A673 (cell line): ENCODE measurements at regions of chr3 and their contacts with region 1.

Region 1: GRCh38 chr3:169764452-169765274 is at the start of gene TERC:
- DNase-seq: peak; percentile 92
- H3K4me3 ChIP-seq: peak within 1 kb of the TSS; percentile 73
- H3K27ac ChIP-seq: peak within 1 kb of the TSS; percentile 90
- H3K4me1 ChIP-seq: no peaks in the 10 kb centered on the region
- H3K27me3 ChIP-seq: no peaks in the 10 kb centered on the region
- CTCF ChIP-seq: no peak
- total RNA-seq, gene TERC: 5.8 and 16.7 TPM in 2 replicates

Region 2: DNA sequence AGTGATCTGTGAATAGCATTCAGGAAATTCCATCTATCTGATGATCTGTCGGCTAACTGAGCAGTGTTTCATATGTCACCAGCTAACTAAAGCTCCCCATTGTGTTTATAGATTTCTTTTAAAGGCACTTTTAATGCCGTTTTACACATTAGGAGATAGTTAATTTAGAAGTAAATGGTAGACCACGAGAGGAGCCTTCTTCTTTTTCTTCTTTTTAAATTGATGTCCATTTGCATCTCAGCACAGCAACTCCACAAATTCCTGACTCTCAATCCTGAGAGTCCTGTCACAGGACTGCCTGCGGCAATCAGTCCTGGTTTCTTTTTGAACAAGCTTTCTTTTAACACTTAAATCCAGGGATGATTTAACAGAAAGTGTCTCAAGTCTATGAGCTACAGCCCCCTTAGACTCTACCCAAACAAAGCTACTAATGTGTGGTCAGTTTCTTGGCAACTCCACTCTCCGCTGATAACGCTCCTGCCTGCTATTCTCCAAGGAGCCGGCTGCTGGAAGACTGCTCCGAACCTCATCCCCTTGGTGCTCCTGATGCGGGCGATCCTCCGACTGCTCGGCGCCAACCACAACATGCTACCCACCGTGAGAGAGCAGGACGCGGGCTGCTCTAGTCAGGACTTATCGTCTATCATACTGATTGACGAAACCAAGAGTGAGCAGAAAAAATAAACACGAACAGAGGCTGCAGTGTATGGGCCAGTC is 522.5 kb before region 1 on chr3:
- CTCF ChIA-PET with region 1: no interaction called
- POLR2A ChIA-PET with region 1: no interaction called
- intact Hi-C with region 1: loop called (anchors 10 kb)
- DNase-seq: peak; percentile 76
- H3K4me3 ChIP-seq: peak overlapping the region; percentile 40
- H3K27ac ChIP-seq: peak overlapping the region; percentile 88
- H3K4me1 ChIP-seq: peaks cover 67% of the 10 kb centered on the region
- H3K27me3 ChIP-seq: no peaks in the 10 kb centered on the region
- CTCF ChIP-seq: no peak

Region 3: DNA sequence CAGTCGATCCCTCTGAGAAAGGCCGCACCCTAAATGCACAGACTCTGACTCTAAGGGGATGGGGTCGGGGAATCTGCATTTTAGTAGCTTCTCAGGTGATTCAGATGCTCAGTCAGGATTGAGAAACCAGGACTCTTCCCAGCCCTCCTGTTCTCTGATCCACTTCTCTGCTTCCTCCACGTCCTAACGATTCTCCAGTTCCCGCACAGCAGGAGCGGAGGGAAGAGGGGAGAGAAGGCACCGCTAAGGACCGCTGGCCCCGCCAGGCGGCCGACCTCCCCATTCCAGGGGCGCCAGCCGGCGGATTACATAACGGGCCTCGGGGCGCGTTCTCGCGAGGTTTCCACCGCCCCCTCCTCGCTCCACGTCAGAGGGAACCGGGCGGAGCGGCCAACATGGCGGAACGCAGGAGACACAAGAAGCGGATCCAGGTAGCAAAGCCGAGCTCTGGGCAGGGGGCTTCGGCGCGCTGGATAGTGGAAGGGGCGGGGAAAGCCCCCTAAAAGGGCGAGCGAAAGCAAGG is 201.8 kb after region 1 on chr3 and contains the start of gene SEC62:
- CTCF ChIA-PET with region 1: no interaction called
- POLR2A ChIA-PET with region 1: no interaction called
- intact Hi-C with region 1: loop called (anchors 10 kb)
- DNase-seq: peak; percentile 95
- H3K4me3 ChIP-seq: peak within 1 kb of the TSS; percentile 88
- H3K27ac ChIP-seq: peak within 1 kb of the TSS; percentile 94
- H3K4me1 ChIP-seq: peaks cover 14% of the 10 kb centered on the region
- H3K27me3 ChIP-seq: no peaks in the 10 kb centered on the region
- CTCF ChIP-seq: peak; percentile 51
- total RNA-seq, gene SEC62: 80.9 and 83.9 TPM in 2 replicates

Region 4: GRCh38 chr3:170055209-170055608 is 290.5 kb after region 1 on chr3:
- CTCF ChIA-PET with region 1: no interaction called
- POLR2A ChIA-PET with region 1: no interaction called
- intact Hi-C with region 1: loop called (anchors 10 kb)
- DNase-seq: no peak
- H3K4me3 ChIP-seq: no peak overlapping the region
- H3K27ac ChIP-seq: no peak overlapping the region
- H3K4me1 ChIP-seq: peaks cover 19% of the 10 kb centered on the region
- H3K27me3 ChIP-seq: no peaks in the 10 kb centered on the region
- CTCF ChIP-seq: no peak